ENCODE measurements at regions of chr13 and their contacts with region 1.

Region 1: DNA sequence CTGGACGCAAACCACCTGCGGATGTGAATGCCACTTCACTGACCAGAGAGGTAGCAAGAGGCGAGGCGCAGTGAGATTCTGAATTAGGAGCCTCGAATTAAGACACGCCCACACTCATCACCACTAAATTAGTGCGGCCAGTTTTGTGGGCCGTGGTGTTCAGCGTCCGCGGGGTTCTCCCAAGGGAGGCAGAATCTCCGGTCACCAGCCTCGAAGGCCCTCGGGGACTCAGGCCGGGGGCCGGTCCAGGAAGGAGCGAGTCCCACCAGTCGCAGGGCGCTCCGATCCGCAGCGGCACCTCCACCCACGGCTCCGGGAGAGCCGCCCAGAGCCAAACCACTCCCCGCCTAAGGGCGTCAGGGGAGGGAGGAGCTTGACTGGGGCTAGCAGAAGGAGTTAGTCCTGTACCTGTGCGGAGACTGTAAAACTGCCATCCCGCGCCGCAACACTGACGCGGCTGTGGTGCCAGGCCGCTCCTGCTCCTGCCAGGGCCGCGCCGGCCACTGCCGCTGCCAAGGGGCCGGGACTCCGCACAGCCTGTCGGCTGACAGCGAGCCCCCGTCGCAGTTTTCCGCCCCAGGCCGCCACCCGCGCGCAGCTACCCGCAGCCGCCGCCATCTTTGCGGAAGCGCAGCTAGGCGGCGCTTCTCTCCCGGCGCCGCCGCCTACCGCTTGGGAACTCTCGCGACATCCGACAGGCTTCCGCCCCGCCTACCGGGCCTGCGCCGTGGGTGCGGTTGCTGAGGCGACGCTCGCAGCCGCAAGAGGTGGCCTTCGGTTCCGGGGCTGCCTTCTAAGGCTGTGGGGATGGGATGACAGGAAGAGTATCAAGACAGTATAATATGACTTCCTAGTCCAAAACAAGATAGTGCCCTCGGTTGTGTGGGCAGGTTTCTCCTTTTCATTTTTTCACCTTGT is at the start of gene MICU2:
- DNase-seq: peak; percentile 92 to 98 (median 96)
- ATAC-seq: peak; percentile 95
- H3K4me3 ChIP-seq: peak within 1 kb of the TSS; percentile 66
- H3K4me3 Mint-ChIP-seq: peak within 1 kb of the TSS; percentile 77 to 94 (median 88)
- H3K27ac ChIP-seq: peak within 1 kb of the TSS; percentile 93
- H3K27ac Mint-ChIP-seq: peak within 1 kb of the TSS; percentile 91 to 97 (median 95)
- H3K4me1 ChIP-seq: peaks cover 16 to 27% of the 10 kb centered on the region in 2 donors
- H3K4me1 Mint-ChIP-seq: peaks cover 25 to 53% (median 49%) of the 10 kb centered on the region in 7 donors
- H3K27me3 ChIP-seq: no peaks in the 10 kb centered on the region
- H3K27me3 Mint-ChIP-seq: peaks cover 0 to 21% (median 7%) of the 10 kb centered on the region in 5 donors
- total RNA-seq, gene MICU2: 32.5 to 45.6 (median 37.5) TPM

Region 2: GRCh38 chr13:19633479-19634255 is 1970.1 kb before region 1 on chr13 and contains the start of gene MPHOSPH8:
- CTCF ChIA-PET with region 1: no interaction called
- POLR2A ChIA-PET with region 1: no interaction called
- intact Hi-C with region 1: loop called in 1 of 2 experiments (anchors 10 kb)
- DNase-seq: peak; percentile 82 to 94 (median 92)
- ATAC-seq: peak; percentile 99
- H3K4me3 ChIP-seq: peak within 1 kb of the TSS; percentile 83
- H3K4me3 Mint-ChIP-seq: peak within 1 kb of the TSS; percentile 96 to 100 (median 100)
- H3K27ac ChIP-seq: peak within 1 kb of the TSS; percentile 91
- H3K27ac Mint-ChIP-seq: peak within 1 kb of the TSS; percentile 98 to 100 (median 99)
- H3K4me1 ChIP-seq: peaks cover 20 to 28% of the 10 kb centered on the region in 2 donors
- H3K4me1 Mint-ChIP-seq: peaks cover 29 to 42% (median 34%) of the 10 kb centered on the region in 7 donors
- H3K27me3 ChIP-seq: no peaks in the 10 kb centered on the region
- H3K27me3 Mint-ChIP-seq: peaks cover 0 to 3% (median 0%) of the 10 kb centered on the region in 5 donors
- total RNA-seq, gene MPHOSPH8: 50.6 to 131 (median 65.6) TPM

Region 3: GRCh38 chr13:20475927-20476691 is 1127.7 kb before region 1 on chr13:
- CTCF ChIA-PET with region 1: no interaction called
- POLR2A ChIA-PET with region 1: interaction called, 3 read pairs
- intact Hi-C with region 1: loop called in 1 of 2 experiments (anchors 5 kb)
- DNase-seq: peak; percentile 46 to 90 (median 84)
- ATAC-seq: peak; percentile 96
- H3K4me3 ChIP-seq: peak overlapping the region; percentile 59
- H3K4me3 Mint-ChIP-seq: peak overlapping the region; percentile 77 to 92 (median 86)
- H3K27ac ChIP-seq: peak overlapping the region; percentile 77
- H3K27ac Mint-ChIP-seq: peak overlapping the region; percentile 89 to 99 (median 98)
- H3K4me1 ChIP-seq: peaks cover 21 to 25% of the 10 kb centered on the region in 2 donors
- H3K4me1 Mint-ChIP-seq: peaks cover 18 to 79% (median 55%) of the 10 kb centered on the region in 7 donors
- H3K27me3 ChIP-seq: no peaks in the 10 kb centered on the region
- H3K27me3 Mint-ChIP-seq: peaks cover 0 to 5% (median 0%) of the 10 kb centered on the region in 5 donors

Region 4: DNA sequence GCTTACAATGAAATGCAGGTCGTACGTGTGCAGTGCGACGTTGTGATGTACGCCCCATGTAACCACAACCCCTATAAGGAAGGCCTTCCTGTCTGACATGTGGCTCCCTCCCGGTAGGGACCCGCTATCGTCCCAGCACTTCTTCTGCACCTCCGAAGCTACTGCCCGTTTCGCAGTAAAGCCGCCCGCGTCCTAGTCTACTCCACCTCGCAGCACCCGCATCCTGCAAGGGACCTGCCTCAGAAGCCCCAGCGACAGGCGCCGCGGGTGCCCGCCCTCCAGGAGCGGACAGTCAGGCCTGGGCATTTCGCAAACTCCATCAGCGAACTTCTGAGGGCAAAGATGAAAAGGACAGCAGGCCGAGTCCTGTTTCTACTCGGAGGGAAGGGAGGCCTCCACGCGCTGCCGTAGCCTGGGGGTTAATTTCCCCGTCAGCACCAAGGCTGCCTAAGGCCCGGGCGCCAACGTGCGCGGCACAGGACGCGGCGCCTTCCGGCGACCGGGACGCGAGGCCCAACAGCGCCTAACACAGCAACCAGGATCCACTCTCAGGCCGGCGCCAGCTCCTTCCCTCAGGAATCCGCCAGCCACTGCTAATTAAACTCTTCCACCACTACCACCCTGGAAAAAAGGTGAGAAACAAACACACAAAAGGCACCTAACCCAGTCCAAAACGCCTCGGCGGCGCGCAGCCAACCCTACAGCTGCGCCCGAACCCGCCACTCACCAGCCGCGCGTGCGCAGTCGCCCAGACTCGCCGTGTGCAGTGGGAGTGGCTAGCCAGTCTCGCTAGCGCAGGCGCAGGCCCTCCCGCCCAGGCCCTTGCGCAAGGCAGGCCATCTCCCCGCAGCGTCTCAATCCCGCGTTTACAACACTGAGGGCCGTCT is 830.4 kb before region 1 on chr13 and contains the start of gene EEF1AKMT1:
- CTCF ChIA-PET with region 1: no interaction called
- POLR2A ChIA-PET with region 1: no interaction called
- intact Hi-C with region 1: loop called in 1 of 2 experiments (anchors 5 kb)
- DNase-seq: peak; percentile 88 to 98 (median 94)
- ATAC-seq: peak; percentile 93
- H3K4me3 ChIP-seq: peak within 1 kb of the TSS; percentile 90
- H3K4me3 Mint-ChIP-seq: peak within 1 kb of the TSS; percentile 85 to 99 (median 94)
- H3K27ac ChIP-seq: peak within 1 kb of the TSS; percentile 93
- H3K27ac Mint-ChIP-seq: peak within 1 kb of the TSS; percentile 94 to 100 (median 99)
- H3K4me1 ChIP-seq: peaks cover 9 to 16% of the 10 kb centered on the region in 2 donors
- H3K4me1 Mint-ChIP-seq: peaks cover 19 to 60% (median 53%) of the 10 kb centered on the region in 7 donors
- H3K27me3 ChIP-seq: no peaks in the 10 kb centered on the region
- H3K27me3 Mint-ChIP-seq: no peaks in the 10 kb centered on the region
- total RNA-seq, gene EEF1AKMT1: 4.2 to 11.2 (median 8.5) TPM

Region 5: GRCh38 chr13:21458813-21459701 is 144.7 kb before region 1 on chr13 and contains the start of gene ZDHHC20:
- CTCF ChIA-PET with region 1: no interaction called
- POLR2A ChIA-PET with region 1: interaction called, 21 read pairs
- intact Hi-C with region 1: loop called (anchors 1 kb)
- DNase-seq: peak; percentile 75 to 99 (median 88)
- ATAC-seq: peak; percentile 98
- H3K4me3 ChIP-seq: peak within 1 kb of the TSS; percentile 90
- H3K4me3 Mint-ChIP-seq: peak within 1 kb of the TSS; percentile 91 to 97 (median 94)
- H3K27ac ChIP-seq: peak within 1 kb of the TSS; percentile 97
- H3K27ac Mint-ChIP-seq: peak within 1 kb of the TSS; percentile 74 to 98 (median 94)
- H3K4me1 ChIP-seq: peaks cover 9 to 19% of the 10 kb centered on the region in 2 donors
- H3K4me1 Mint-ChIP-seq: peaks cover 27 to 55% (median 42%) of the 10 kb centered on the region in 7 donors
- H3K27me3 ChIP-seq: no peaks in the 10 kb centered on the region
- H3K27me3 Mint-ChIP-seq: peaks cover 0 to 7% (median 0%) of the 10 kb centered on the region in 5 donors
- total RNA-seq, gene ZDHHC20: 60.8 to 89.9 (median 71.7) TPM

Region 6: DNA sequence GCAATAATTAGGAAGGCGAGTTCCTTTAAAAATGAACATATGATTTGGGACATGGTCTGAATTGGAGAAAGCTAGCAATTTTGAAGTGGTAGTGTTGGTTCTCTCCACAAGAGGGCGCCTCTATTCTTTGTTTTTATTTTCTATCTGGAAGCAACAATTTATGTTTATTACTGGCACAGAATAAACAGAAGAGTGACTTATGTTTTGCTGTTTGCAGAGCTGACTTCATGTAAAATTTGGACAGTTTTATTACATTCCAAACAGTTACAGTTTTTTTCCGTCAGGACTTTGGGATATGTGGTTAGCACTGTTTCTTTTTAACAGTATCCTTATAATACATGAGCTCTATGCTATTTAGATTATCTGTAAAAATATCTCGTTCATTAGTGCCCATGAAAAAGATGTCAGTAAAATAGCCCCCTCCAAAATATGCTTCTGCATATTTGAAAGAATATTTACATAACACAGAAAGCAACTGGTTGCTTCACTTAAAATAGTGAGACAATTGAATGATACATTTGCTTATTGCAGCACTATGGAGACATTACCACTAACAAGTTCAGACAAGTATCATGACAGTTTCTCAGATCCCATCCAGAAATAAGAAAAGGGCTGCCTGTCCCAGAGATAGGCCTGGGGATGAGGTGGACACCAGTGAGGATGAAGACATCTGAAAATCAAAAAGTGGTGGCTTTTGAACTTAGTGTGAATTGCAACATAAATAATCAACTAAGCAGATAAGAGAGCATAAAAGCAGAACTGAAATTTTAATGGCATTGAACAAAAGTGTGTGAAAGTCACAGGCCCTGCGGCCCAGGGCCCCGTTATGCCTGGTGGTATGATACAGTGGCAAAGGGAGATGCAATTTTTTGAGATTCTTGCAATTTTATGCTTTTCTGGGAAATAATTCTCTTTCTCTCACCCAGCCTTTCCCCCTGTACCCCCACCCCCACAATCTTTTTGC is 34.8 kb after region 1 on chr13:
- CTCF ChIA-PET with region 1: interaction called, 4 read pairs
- POLR2A ChIA-PET with region 1: interaction called, 11 read pairs
- intact Hi-C with region 1: loop called in 1 of 2 experiments (anchors 1 kb)
- DNase-seq: peak in 5 of 9 donors; percentile 21 to 47 (median 38)
- ATAC-seq: peak; percentile 51
- H3K4me3 ChIP-seq: no peak overlapping the region
- H3K4me3 Mint-ChIP-seq: no peak overlapping the region
- H3K27ac ChIP-seq: no peak overlapping the region
- H3K27ac Mint-ChIP-seq: no peak overlapping the region
- H3K4me1 ChIP-seq: no peaks in the 10 kb centered on the region
- H3K4me1 Mint-ChIP-seq: peaks cover 0 to 5% (median 0%) of the 10 kb centered on the region in 7 donors
- H3K27me3 ChIP-seq: no peaks in the 10 kb centered on the region
- H3K27me3 Mint-ChIP-seq: peaks cover 0 to 7% (median 3%) of the 10 kb centered on the region in 5 donors

Region 7: DNA sequence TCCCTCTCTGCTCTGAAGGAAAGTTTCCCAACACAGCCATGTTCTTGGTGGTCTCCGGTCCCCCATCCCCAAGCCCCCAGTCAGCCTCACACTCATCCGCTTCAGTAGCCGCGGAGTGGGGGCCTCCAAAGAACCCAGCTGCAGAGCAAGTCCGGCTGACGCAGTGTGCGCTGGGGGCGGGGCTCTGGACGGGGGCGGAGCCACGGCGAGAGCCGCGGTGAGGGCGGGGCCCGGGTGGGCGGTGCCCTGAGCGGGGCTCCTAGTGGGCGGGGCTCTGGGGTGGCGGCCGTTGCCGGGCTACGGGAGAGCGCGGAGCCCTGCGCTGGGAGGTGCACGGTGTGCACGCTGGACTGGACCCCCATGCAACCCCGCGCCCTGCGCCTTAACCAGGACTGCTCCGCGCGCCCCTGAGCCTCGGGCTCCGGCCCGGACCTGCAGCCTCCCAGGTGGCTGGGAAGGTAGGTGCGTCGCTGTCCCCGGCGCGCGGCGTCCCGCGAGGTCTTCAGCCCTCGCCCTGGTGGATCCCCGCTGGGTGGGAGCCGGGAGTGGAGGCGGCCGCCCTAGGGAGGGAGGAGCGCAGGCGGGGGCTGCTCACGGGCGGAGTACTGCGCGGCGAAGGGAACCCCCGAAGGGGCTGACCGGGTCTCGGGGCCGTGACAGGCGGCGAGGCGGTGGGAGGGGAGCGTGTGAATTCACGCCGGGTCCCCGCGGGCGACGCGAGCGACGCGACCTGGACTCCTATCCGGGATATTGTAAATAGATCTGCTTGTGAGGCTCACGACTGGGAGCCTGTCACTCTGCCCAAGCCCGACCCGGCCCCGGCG is 1975.5 kb after region 1 on chr13:
- CTCF ChIA-PET with region 1: no interaction called
- POLR2A ChIA-PET with region 1: no interaction called
- intact Hi-C with region 1: loop called in 1 of 2 experiments (anchors 5 kb)
- DNase-seq: peak; percentile 76 to 96 (median 87)
- ATAC-seq: peak; percentile 99
- H3K4me3 ChIP-seq: peak overlapping the region; percentile 79
- H3K4me3 Mint-ChIP-seq: peak overlapping the region; percentile 43 to 89 (median 81)
- H3K27ac ChIP-seq: peak overlapping the region; percentile 67
- H3K27ac Mint-ChIP-seq: peak overlapping the region in 3 of 9 donors; percentile 46 to 80 (median 65)
- H3K4me1 ChIP-seq: peaks cover 0 to 4% of the 10 kb centered on the region in 2 donors
- H3K4me1 Mint-ChIP-seq: peaks cover 10 to 22% (median 18%) of the 10 kb centered on the region in 7 donors
- H3K27me3 ChIP-seq: peaks cover 0 to 11% of the 10 kb centered on the region in 2 donors
- H3K27me3 Mint-ChIP-seq: peaks cover 34 to 72% (median 46%) of the 10 kb centered on the region in 5 donors

Measured in naive thymus-derived CD4-positive, alpha-beta T cell (primary cell).